ENCODE measurements at regions of chr10 and their contacts with region 1.

Region 1: DNA sequence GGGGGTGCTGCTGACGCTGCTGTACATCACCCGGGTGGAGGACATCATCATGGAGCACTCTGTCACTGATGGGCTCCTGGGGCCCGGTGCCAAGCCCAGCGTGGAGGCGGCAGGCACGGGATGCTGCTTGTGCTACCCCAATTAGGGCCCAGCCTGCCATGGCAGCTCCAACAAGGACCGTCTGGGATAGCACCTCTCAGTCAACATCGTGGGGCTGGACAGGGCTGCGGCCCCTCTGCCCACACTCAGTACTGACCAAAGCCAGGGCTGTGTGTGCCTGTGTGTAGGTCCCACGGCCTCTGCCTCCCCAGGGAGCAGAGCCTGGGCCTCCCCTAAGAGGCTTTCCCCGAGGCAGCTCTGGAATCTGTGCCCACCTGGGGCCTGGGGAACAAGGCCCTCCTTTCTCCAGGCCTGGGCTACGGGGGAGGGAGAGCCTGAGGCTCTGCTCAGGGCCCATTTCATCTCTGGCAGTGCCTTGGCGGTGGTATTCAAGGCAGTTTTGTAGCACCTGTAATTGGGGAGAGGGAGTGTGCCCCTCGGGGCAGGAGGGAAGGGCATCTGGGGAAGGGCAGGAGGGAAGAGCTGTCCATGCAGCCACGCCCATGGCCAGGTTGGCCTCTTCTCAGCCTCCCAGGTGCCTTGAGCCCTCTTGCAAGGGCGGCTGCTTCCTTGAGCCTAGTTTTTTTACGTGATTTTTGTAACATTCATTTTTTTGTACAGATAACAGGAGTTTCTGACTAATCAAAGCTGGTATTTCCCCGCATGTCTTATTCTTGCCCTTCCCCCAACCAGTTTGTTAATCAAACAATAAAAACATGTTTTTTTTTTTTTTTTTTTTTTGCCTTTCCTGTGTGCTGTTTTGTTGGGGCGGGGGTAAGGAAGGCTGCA is 55.8 kb downstream of the TSPAN15 start:
- DNase-seq: no peak
- H3K4me3 ChIP-seq: no peak overlapping the region
- CTCF ChIP-seq: no peak

Region 2: GRCh38 chr10:69418052-69418752 is 88.9 kb before region 1 on chr10:
- CTCF ChIA-PET with region 1: interaction called, 118 read pairs
- POLR2A ChIA-PET with region 1: interaction called, 3 read pairs
- DNase-seq: no peak
- H3K4me3 ChIP-seq: no peak overlapping the region
- CTCF ChIP-seq: no peak

Region 3: DNA sequence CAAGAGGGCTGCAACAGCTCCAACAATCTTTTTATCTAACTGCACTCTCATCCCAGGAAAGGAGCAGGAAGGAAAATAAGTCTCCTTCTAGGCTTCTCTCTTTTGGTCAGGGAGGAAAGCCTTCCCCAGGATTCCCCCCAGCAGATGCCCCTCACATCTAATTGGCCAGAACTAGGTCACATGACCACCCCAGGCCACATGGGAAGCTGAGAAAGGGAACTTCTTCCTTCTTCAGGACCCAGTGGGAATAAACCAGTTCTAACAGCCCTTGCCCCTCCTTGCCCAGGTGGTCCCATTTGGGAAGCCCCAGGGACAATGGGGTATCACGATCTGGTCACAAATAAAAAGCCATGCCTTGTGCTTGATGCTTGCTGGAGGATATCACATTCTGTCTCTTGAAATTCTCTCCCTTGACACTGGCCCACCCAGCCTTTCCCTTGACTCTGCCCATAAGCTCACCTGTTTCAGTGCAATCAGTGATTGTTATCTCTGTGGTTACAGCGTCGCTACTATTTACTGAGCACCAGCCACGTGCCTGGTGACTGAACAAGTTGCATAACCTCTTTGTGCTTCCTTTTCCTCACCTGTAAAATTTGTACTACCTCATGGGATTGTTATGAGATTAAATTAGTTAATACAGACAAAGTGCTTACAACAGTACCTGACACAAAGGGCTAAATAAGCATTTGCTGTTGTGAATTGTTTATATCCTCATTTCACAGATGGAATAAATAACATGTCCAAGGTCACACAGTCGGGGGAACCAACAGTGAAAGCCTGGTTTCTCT is 81.4 kb before region 1 on chr10:
- CTCF ChIA-PET with region 1: interaction called, 118 read pairs
- POLR2A ChIA-PET with region 1: no interaction called
- DNase-seq: no peak
- H3K4me3 ChIP-seq: no peak overlapping the region
- CTCF ChIP-seq: no peak

Region 4: GRCh38 chr10:69696073-69696731 is 189.1 kb after region 1 on chr10:
- CTCF ChIA-PET with region 1: no interaction called
- POLR2A ChIA-PET with region 1: no interaction called
- DNase-seq: peak; percentile 79
- H3K4me3 ChIP-seq: no peak overlapping the region
- CTCF ChIP-seq: peak; percentile 49

Region 5: GRCh38 chr10:69953851-69954250 is 446.8 kb after region 1 on chr10:
- CTCF ChIA-PET with region 1: no interaction called
- POLR2A ChIA-PET with region 1: no interaction called
- DNase-seq: no peak
- H3K4me3 ChIP-seq: no peak overlapping the region
- CTCF ChIP-seq: no peak

Measured in AG04449 (cell line).